Dorsolateral prefrontal cortex (tissue), 120 donors: ENCODE measurements at regions of chr5 and their contacts with region 1.

Region 1: DNA sequence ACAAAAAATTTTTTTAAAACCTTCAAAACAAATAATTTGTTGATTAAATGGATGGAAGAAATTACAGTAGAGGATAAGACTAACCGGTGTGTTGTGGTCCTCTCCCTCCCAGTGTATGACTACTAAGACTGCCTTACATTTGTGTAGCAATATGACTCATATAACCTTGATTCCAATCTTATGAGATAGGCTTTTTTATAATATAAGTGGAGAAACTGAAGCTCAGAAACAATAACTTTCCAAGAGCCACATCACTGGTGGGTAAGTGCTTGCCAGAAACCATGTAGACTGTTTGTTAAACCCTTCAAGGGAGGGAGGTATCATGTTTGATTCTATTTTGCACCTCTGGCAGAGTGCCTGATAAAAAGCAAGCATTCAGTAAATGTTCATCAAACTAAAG is 47.5 kb downstream of the NLN start:
- DNase-seq: no peak
- H3K4me3 ChIP-seq: no peak overlapping the region
- H3K27ac ChIP-seq: peak overlapping the region in 31 of 59 donors; percentile 6 to 89 (median 55)
- H3K27me3 ChIP-seq: no peaks in the 10 kb centered on the region
- CTCF ChIP-seq: no peak

Region 2: DNA sequence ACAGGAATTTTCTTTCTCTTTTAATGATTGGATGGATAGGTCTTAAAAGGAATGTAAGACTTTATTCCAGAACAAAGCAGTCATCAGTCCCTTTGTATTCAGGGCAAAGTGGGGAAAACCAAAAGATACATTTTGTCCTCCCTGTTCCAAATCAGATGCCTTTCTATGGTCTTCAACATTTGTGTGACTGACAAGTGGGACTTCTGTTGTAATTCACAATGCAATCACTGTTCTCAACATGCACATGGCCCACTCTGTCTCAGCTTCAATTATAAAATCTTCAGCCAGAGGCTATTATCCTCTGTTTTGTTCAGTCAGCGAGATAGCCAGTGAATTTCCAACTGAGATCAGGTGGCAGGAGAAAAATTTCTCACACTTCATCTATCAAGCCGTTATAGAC is 61.3 kb after region 1 on chr5:
- intact Hi-C with region 1: loop called in 1 of 2 experiments (anchors 5 kb)
- DNase-seq: peak in 2 of 10 donors; percentile 41 to 46
- H3K4me3 ChIP-seq: peak overlapping the region in 20 of 59 donors; percentile 0 to 42 (median 11)
- H3K27ac ChIP-seq: peak overlapping the region; percentile 72 to 99 (median 95)
- H3K27me3 ChIP-seq: no peaks in the 10 kb centered on the region
- CTCF ChIP-seq: peak in 6 of 56 donors; percentile 5 to 28 (median 14)